Mammary epithelial cell (primary cell): ENCODE measurements at regions of chr22 and their contacts with region 1.

Region 1: DNA sequence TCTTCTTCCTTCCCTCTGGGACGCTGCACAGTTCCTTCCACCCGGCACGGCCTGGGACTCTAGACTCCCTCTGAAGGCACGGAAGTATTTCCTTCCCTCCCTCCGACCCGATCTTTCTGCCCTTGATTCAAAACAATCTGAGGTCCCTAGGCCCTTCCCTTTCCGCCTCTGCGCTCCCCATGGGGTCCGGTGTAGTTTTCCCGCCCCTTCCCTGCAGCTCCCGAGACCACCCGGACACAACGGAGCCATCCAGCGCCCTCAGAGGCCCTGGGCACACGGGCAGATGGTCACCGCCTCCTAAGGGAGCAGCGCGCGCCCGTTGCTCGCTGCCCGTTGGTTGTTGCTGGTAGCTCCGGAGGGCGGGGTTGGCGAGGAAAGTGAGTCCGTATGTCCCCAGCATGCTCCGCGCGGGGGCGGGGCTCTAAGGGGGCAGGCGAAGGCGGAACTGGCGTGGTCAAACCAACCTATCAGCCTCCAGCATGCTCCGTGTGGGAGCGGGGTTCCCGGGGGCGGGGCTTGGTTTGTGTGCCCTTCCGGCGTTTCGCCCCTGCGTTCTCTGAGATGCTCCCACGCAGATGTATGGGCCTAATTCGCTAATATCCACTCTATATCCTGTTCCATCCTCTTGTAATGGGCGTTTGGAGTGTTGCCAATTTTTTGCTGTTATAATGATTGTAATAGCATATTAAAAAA is 19.6 kb downstream of the MIF start:
- DNase-seq: peak; percentile 98
- H3K4me3 ChIP-seq: peak overlapping the region; percentile 61 to 71 (median 69)
- H3K27ac ChIP-seq: peak overlapping the region; percentile 81
- H3K4me1 ChIP-seq: peaks cover 4% of the 10 kb centered on the region
- H3K27me3 ChIP-seq: no peaks in the 10 kb centered on the region
- CTCF ChIP-seq: no peak

Region 2: DNA sequence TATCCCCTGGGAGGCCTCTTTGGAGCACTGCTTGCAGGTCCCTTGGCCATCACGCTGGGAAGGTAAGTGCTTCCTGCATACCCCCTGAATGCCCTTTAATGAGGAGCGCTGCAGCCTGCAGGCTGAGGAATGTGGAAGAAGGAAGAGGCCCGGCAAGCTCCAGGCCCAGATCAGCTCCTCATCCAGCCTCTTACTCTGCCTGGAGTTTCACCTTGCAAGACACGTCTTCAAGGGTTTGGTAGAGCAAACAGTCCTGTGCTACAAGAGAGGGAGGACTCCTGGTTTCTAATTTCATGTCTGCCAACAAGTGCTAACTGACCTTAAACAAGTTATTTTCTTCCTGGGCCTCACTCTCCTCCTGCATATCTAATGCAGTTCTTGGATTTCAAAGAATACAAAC is 45.2 kb before region 1 on chr22:
- CTCF ChIA-PET with region 1: no interaction called
- dilution Hi-C with region 1: no loop called
- in situ Hi-C with region 1: no loop called
- intact Hi-C with region 1: no loop called
- DNase-seq: no peak
- H3K4me3 ChIP-seq: no peak overlapping the region
- H3K27ac ChIP-seq: no peak overlapping the region
- H3K4me1 ChIP-seq: no peaks in the 10 kb centered on the region
- H3K27me3 ChIP-seq: no peaks in the 10 kb centered on the region
- CTCF ChIP-seq: no peak

Region 3: GRCh38 chr22:23970816-23971486 is 57.1 kb after region 1 on chr22:
- CTCF ChIA-PET with region 1: no interaction called
- dilution Hi-C with region 1: loop called (anchors 10 kb)
- in situ Hi-C with region 1: no loop called
- intact Hi-C with region 1: no loop called
- DNase-seq: no peak
- H3K4me3 ChIP-seq: no peak overlapping the region
- H3K27ac ChIP-seq: no peak overlapping the region
- H3K4me1 ChIP-seq: no peaks in the 10 kb centered on the region
- H3K27me3 ChIP-seq: no peaks in the 10 kb centered on the region
- CTCF ChIP-seq: no peak

Region 4: DNA sequence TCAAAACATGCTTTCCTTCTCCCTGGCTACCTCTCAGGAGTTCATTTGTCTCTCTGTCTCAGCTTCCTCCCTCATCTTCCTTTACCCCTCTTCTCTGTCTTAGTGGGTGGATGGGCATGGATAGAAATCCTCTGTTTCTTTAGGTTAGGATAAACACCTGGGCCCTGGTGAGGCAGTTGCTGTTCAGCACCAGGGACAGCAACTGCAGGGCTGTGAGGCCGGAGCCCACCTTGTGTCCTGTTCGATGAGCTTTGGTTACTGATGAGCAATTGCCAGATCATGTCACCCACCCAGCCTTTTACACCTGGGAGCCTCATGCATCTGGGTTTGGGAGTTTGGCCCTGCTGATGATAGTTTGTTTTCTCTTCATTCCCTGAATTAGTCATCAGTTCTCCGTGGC is 1279.7 kb after region 1 on chr22:
- CTCF ChIA-PET with region 1: no interaction called
- dilution Hi-C with region 1: no loop called
- in situ Hi-C with region 1: no loop called
- intact Hi-C with region 1: no loop called
- DNase-seq: no peak
- H3K4me3 ChIP-seq: no peak overlapping the region
- H3K27ac ChIP-seq: no peak overlapping the region
- H3K4me1 ChIP-seq: no peaks in the 10 kb centered on the region
- H3K27me3 ChIP-seq: no peaks in the 10 kb centered on the region
- CTCF ChIP-seq: no peak